HEK293T (cell line): ENCODE measurements at regions of chr12 and their contacts with region 1.

Region 1: DNA sequence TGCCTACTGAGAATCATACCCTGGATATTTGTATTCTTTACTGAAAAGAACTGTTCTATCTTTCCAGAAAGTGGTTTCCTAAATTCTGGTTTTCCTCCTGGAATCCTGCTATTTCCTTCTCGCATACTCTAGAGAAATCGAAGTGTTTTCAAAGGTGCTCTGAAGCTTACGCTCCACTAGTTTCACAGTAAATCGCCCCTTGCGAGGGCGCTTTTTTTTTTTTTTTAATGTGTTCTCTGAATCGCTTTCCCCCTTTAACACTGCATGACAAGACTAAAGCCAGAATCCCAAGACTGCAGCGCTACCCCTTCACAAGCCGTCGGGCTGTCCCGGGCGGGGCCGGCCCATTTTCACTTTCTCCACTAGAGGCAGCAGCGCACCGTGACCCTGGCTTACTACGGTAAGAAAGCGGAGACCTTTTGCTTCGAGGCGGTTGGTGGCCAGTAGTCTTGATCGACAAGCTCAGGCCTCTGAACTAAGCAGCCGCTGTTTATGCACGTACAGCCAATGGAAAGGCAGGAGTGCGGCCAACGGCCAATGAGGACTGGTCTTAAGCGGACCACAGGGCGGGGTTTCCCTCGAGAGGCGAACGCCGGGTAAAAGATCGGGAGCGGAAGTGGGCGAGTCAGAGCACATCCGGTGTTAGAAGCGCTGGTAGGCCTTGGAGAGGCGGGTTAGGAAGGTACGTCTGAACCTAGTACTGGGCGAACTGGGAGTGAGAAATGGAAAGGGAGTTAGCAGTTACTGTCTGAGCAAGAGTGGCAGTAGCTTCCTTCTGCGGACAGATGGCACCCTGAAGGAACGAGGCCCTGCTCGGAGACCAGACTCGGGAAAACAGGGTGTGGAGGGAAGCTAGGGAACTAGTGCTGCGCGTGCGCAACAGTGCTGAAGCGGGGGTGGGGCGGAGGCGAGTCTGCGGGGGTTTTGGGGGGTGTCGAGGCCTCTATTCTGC is at the start of gene TMBIM6:
- DNase-seq: peak; percentile 96

Region 2: DNA sequence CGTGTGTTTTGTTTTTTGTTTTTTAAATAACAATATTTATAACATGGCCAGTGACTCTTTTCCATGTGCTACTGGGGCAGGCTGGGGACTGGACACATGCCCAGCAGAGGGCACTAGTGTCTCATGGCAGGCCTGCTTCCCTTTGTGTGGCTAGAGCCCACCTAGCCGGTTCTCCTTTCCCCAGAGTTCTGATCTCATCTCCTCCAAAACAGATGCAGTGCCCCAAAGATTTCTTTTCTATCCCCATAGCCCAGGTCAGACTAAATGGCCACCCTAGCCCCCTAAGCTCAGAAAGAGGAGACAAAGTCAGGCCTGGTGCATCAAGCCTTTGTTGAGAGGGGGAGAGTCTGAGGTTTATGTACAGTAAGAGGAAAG is 96.6 kb before region 1 on chr12:
- CTCF ChIA-PET with region 1: no interaction called
- POLR2A ChIA-PET with region 1: interaction called, 14 read pairs
- DNase-seq: peak; percentile 85

Region 3: GRCh38 chr12:49707128-49707811 is 33.9 kb before region 1 on chr12 and contains the start of gene FMNL3:
- CTCF ChIA-PET with region 1: interaction called, 8 read pairs
- POLR2A ChIA-PET with region 1: interaction called, 19 read pairs
- DNase-seq: peak; percentile 99

Region 4: GRCh38 chr12:49720214-49720613 is 21.0 kb before region 1 on chr12:
- CTCF ChIA-PET with region 1: interaction called, 5 read pairs
- POLR2A ChIA-PET with region 1: interaction called, 17 read pairs
- DNase-seq: no peak

Region 5: DNA sequence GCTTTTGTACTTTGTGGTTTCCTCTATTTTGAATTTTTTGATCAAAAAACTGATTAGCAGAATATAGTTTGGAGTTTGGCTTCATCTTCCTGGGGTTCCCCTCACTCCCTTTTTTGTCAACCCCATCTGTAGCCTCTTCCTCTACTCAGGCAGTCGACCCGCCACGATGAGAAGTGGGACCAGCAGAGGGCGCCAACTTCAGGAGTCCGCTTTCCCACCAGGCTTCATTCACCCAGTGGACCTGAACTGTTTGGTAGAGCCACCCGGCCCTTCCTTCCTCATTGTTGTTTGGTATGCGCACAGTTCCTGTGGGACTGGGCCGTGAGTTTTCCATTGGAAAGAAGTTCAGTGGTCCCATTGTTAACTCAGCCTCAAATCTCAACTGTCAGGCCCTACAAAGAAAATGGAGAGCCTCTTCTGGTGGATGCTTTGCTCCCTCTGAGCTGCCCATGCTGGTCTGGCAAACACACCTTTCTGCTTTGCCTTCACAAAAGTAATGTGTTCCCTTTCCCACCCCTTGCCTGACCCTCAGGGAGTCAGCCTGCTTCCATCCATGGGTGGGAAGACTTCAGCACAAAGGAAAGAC is 21.9 kb after region 1 on chr12:
- CTCF ChIA-PET with region 1: interaction called, 5 read pairs
- POLR2A ChIA-PET with region 1: interaction called, 17 read pairs
- DNase-seq: peak; percentile 73

Region 6: DNA sequence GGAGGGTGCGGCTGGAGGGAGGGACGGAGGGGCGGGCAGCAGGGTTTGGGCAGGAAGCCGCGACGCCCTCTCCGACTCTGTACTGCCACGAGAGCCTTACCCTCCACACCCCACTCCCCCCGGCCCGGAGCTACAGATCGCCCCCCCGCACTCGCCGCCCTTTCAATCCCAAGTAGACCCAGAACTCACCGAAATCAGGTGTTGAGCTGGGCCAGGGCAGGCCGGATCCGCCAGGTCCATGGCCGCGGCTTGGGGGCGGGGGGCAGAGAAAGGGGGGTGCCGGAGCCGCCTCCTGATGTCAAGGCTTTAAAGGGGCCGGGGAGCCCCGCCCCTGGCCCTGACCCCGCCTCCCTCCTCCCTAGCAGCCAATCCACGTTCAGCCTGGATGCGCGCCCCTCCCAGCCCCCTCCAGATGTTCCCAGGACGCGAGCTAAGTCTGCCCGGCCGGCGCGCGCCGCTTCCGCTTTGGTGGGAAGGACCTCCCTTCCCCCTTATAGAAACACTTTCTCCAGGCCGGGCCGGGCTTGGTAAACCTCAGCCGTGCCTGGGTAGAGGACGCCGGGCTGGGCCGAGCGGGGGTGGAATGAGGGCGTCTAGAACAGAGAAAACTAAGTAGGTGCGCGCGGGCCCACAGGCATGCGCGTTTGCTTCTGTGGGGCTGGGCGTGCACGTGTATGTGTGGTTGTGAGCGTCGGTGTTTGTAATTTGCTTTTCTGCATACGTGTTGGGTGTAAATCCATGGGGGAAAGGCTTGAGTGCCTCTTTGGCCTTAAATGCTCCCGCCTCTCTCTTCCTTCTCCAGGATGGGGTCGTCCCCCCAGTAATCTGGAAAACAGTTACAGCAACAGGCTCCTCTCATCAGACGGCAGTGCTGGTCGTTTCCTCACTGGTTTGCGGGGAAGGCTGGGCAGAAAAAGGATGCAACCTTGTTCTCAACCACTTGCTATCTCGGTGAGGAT is 87.2 kb after region 1 on chr12 and contains the start of gene NCKAP5L:
- CTCF ChIA-PET with region 1: interaction called, 3 read pairs
- POLR2A ChIA-PET with region 1: interaction called, 12 read pairs
- DNase-seq: peak; percentile 97

Region 7: GRCh38 chr12:49842519-49843352 is 101.5 kb after region 1 on chr12 and contains the start of gene BCDIN3D:
- CTCF ChIA-PET with region 1: interaction called, 3 read pairs
- POLR2A ChIA-PET with region 1: interaction called, 11 read pairs
- DNase-seq: peak; percentile 86

Region 8: GRCh38 chr12:50006789-50007436 is 265.7 kb after region 1 on chr12:
- CTCF ChIA-PET with region 1: no interaction called
- POLR2A ChIA-PET with region 1: no interaction called
- DNase-seq: no peak